Left ventricle myocardium superior (tissue), 1 donor: ENCODE measurements at regions of chr5 and their contacts with region 1.

Region 1: GRCh38 chr5:147822686-147823491 is 8.6 kb downstream of the SPINK1 start:
- DNase-seq: peak; percentile 34
- ATAC-seq: peak; percentile 75

Region 2: DNA sequence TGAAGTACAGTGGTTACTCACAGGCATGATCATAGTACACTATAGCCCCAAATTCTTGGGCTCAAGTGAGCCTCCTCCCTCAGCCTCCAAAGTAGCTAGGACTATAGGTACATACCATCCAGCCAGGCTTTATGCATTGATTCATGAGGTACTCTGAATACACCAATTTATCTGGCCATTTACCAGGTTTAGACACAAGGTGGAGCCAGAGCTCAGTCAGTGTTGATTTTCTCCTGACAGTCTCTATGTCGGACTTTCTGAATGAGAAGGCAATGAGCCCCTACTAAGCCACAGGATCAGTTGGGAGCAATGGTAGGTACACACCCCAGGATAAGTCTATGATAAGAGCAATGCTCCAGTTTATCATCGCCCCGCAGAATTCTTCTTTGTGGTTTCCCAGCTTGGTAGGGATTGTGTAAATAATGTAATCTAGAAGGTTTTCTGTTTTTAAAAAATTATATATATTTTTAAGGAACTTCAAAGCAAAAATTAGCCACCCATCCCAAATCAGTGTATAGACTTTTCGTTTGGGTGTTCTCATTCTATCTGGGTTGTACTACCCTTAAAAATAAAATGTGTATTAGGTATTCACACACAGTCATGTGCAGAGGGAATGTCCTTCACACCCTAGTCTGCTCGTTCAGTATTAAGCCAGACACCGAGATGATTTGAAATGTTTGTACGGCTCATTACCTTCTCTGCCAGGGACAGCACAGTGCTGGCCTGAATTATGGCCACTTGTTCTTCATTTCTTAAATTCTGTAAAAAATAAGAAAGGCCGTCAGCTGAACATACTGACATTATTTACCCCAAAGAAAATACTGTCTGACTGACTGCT is 194.6 kb before region 1 on chr5:
- intact Hi-C with region 1: loop called (anchors 2 kb)
- DNase-seq: no peak
- ATAC-seq: peak; percentile 82